AG04449 (cell line): ENCODE measurements at regions of chr11 and their contacts with region 1.

Region 1: GRCh38 chr11:72413914-72414628 is 20.3 kb downstream of the CLPB start:
- DNase-seq: no peak
- H3K4me3 ChIP-seq: no peak overlapping the region
- CTCF ChIP-seq: peak; percentile 92

Region 2: DNA sequence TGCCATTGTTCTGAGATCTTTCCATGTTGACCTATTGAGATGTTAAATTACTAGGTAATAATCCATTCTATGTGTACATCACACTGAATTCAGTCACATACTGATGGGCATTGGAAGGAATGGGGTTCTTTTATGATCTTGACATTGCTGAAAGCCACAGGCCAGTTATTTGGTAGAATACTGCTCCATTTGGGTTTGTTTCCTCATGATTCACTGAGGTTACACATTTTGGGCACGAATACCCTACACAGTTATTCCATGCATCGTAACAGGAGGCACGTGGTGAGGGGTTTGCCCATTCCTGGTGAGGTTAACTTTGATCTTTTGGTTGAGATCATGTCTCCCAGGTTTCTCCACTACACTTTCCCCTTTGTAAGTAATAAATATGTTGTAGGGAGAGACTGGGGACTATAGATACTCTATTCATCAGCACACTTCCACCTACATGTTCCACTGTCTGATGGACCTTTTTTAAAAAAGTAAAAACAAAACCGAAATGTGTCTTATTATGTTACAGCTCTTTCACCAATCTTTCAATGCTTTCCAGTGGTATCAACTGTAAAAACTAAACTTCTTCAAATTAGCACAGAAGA is 234.2 kb before region 1 on chr11:
- CTCF ChIA-PET with region 1: interaction called, 15 read pairs
- POLR2A ChIA-PET with region 1: no interaction called
- DNase-seq: no peak
- H3K4me3 ChIP-seq: no peak overlapping the region
- CTCF ChIP-seq: no peak

Region 3: GRCh38 chr11:72244361-72245262 is 169.5 kb before region 1 on chr11:
- CTCF ChIA-PET with region 1: interaction called, 15 read pairs
- POLR2A ChIA-PET with region 1: no interaction called
- DNase-seq: no peak
- H3K4me3 ChIP-seq: 0 out of 2 replicates have a peak overlapping the region, but pooled peaks have one; percentile 15
- CTCF ChIP-seq: no peak

Region 4: DNA sequence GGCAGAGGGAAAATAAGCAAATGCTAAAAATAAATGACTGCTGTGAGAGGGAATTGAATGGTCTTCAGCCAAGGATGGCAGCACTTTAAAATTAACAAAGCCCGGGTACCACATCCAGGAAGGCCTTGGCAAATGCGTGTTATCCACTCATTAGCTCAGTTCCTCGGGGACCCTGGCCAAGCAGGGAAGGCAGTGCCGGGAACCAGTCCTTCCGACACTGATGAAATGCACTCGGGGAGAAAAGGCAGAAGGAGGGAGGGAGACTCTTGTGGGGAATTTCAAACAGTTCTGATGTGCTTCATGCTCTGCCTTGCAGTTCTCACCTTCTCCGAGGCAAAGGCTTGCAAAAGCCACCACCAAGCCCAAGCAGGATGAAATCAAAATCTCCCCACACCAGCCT is 18.0 kb before region 1 on chr11:
- CTCF ChIA-PET with region 1: interaction called, 24 read pairs
- POLR2A ChIA-PET with region 1: no interaction called
- DNase-seq: no peak
- H3K4me3 ChIP-seq: no peak overlapping the region
- CTCF ChIP-seq: no peak